Activated B cell treated with CpG ODN at 0.5 μM for 24 hours (primary cell): ENCODE measurements at regions of chr13 and their contacts with region 1.

Region 1: GRCh38 chr13:20840568-20840967 is 62.0 kb downstream of the XPO4 start:
- DNase-seq: no peak
- ATAC-seq: no peak
- H3K4me3 Mint-ChIP-seq: no peak overlapping the region
- H3K27ac Mint-ChIP-seq: no peak overlapping the region
- H3K4me1 Mint-ChIP-seq: no peaks in the 10 kb centered on the region
- H3K27me3 Mint-ChIP-seq: no peaks in the 10 kb centered on the region
- CTCF ChIP-seq: no peak

Region 2: GRCh38 chr13:20869542-20869941 is 29.0 kb after region 1 on chr13:
- CTCF ChIA-PET with region 1: no interaction called
- POLR2A ChIA-PET with region 1: no interaction called
- intact Hi-C with region 1: loop called (anchors 2 kb)
- DNase-seq: no peak
- ATAC-seq: no peak
- H3K4me3 Mint-ChIP-seq: no peak overlapping the region
- H3K27ac Mint-ChIP-seq: no peak overlapping the region
- H3K4me1 Mint-ChIP-seq: peaks cover 31% of the 10 kb centered on the region
- H3K27me3 Mint-ChIP-seq: no peaks in the 10 kb centered on the region
- CTCF ChIP-seq: no peak

Region 3: DNA sequence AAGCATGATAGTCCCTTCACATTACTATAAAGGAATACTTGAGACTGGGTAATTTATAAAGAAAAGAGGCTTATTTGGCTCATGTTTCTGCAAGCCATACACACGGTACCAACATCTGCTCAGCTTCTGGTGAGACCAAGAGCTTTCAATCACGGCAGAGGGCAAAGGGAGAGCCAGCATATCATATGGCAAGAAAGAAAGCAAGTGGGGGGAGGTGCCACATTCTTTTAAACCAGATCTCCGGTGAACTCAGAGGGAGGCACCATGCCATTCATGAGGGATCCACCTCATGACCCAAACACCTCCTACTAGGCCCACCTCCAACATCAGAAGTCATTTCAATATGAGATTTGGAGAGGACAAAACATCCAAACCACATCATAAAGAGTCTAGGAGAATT is 41.6 kb after region 1 on chr13:
- CTCF ChIA-PET with region 1: no interaction called
- POLR2A ChIA-PET with region 1: no interaction called
- intact Hi-C with region 1: no loop called
- DNase-seq: no peak
- ATAC-seq: no peak
- H3K4me3 Mint-ChIP-seq: no peak overlapping the region
- H3K27ac Mint-ChIP-seq: no peak overlapping the region
- H3K4me1 Mint-ChIP-seq: peaks cover 37% of the 10 kb centered on the region
- H3K27me3 Mint-ChIP-seq: no peaks in the 10 kb centered on the region
- CTCF ChIP-seq: no peak